HepG2 (cell line): ENCODE measurements at regions of chr19 and their contacts with region 1.

Region 1: GRCh38 chr19:43124360-43124759 is 41.9 kb upstream of the PSG2 start:
- DNase-seq: no peak
- ATAC-seq: no peak
- H3K4me3 ChIP-seq: no peak overlapping the region
- H3K27ac ChIP-seq: no peak overlapping the region
- H3K4me1 ChIP-seq: no peaks in the 10 kb centered on the region
- H3K27me3 ChIP-seq: no peaks in the 10 kb centered on the region; a peak in 1 of 5 replicates
- CTCF ChIP-seq: no peak
- EP300 ChIP-seq: no peak
- POLR2A ChIP-seq: no peak
- RAD21 ChIP-seq: no peak

Region 2: DNA sequence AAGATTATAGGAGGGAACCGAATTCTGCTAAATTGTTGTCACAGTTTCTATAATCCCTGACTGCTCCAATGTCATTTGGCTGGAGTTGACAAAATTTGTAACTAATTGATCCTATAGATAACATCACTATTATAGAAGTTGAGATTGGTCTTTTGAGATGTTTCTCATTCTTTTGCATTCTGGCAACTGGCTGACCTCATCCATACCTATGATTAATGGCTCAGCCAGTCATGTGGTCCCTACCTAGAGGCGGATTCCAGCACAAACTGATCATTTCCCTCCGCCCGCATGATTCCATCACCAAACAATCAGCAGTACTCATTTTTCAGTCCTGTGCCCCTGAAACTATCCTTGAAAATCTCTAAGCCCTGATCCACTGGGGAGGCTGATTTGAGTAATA is 46.0 kb before region 1 on chr19:
- CTCF ChIA-PET with region 1: no interaction called
- POLR2A ChIA-PET with region 1: no interaction called
- in situ Hi-C with region 1: no loop called
- intact Hi-C with region 1: no loop called
- DNase-seq: no peak
- ATAC-seq: no peak
- H3K4me3 ChIP-seq: no peak overlapping the region
- H3K27ac ChIP-seq: no peak overlapping the region
- H3K4me1 ChIP-seq: peaks cover 5% of the 10 kb centered on the region; the same call in 1 of the 2 replicates
- H3K27me3 ChIP-seq: no peaks in the 10 kb centered on the region
- CTCF ChIP-seq: no peak
- EP300 ChIP-seq: no peak
- POLR2A ChIP-seq: no peak
- RAD21 ChIP-seq: no peak

Region 3: DNA sequence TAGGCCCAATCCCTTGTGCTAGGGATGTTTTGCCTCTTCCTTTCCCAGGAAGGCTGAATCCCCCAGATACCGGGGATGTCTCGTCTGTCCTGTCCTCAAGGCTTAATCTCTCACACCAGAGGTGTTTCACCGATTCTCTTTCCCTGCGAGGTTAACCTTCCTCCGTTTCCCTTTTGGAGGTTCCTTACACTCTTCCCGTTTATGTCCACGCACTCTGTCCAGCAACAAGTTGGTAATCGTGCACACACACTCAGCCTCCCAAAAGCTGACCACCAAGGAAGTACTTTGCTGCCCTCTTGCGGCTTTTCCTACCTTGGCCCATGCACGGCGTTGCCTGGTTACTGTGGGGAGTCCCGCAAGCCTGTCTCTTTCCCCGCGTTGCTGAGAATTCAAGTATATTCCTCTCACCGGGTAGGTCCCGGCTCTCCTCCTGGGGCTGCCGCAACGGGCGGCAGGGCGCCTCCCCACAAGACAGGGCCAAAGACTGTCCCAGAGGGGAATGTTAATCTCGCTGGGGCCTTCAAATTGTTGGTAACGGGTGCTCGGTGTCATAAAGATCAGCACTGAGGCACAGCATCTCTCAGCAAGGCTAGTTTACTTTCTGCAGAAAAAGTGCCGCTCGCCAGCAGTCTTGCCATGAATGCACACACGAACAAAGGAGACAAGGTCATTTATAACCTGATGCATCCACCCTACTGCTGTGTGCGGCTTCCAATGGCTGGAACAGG is 192.4 kb after region 1 on chr19:
- CTCF ChIA-PET with region 1: no interaction called
- POLR2A ChIA-PET with region 1: no interaction called
- in situ Hi-C with region 1: loop called (anchors 25 kb)
- intact Hi-C with region 1: no loop called
- DNase-seq: peak; percentile 56
- ATAC-seq: peak; percentile 95
- H3K4me3 ChIP-seq: no peak overlapping the region
- H3K27ac ChIP-seq: no peak overlapping the region
- H3K4me1 ChIP-seq: no peaks in the 10 kb centered on the region
- H3K27me3 ChIP-seq: peaks cover 0 to 6% of the 10 kb centered on the region in 2 experiments; a peak in 1 of 5 replicates
- CTCF ChIP-seq: peak; percentile 86
- EP300 ChIP-seq: no peak
- POLR2A ChIP-seq: no peak
- RAD21 ChIP-seq: peak; percentile 51